ENCODE measurements at regions of chr17 and their contacts with region 1.

Region 1: DNA sequence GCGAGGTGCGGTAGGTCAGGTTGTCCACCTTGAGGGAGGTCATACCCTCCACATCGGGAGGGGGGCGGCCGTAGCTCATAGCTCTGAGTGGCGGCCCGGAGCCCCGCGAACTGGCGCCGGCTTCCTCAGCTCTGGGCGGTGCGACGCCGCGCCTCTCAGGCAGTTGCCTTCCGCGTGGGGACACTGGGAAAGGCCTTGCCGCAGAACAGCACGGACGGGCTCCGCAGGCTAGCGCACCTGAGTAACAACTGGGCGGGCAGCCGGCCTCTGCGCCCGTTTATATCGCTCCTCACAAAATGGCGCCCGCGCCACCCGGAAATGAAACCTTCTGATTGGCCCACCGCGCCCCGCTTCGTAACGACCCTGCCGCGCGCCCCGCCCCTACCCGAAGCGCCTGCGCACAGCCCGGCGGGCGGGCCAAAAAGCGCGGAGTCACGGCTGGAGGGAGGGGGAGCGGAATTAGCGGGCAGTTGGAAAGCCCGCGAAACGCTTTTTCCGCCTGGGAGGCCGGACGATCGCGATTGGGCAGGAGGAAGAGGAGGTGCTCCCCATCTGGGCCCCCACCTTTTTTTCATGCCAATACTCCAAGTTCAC is at the start of gene SRSF2:
- DNase-seq: peak; percentile 99
- ATAC-seq: peak; percentile 75
- H3K4me3 Mint-ChIP-seq: peak within 1 kb of the TSS; percentile 85
- H3K27ac Mint-ChIP-seq: peak within 1 kb of the TSS; percentile 98
- H3K4me1 Mint-ChIP-seq: peaks cover 40% of the 10 kb centered on the region
- H3K27me3 Mint-ChIP-seq: no peaks in the 10 kb centered on the region
- total RNA-seq, gene SRSF2: 335 to 340 TPM

Region 2: GRCh38 chr17:75784473-75785015 is 952.6 kb before region 1 on chr17 and contains the start of gene UNK:
- CTCF ChIA-PET with region 1: no interaction called
- POLR2A ChIA-PET with region 1: no interaction called
- intact Hi-C with region 1: loop called (anchors 1 to 5 kb)
- DNase-seq: peak; percentile 97
- ATAC-seq: peak; percentile 67
- H3K4me3 Mint-ChIP-seq: peak within 1 kb of the TSS; percentile 91
- H3K27ac Mint-ChIP-seq: peak within 1 kb of the TSS; percentile 100
- H3K4me1 Mint-ChIP-seq: peaks cover 55% of the 10 kb centered on the region
- H3K27me3 Mint-ChIP-seq: peaks cover 1% of the 10 kb centered on the region
- total RNA-seq, gene UNK: 24.5 to 33.7 TPM

Region 3: DNA sequence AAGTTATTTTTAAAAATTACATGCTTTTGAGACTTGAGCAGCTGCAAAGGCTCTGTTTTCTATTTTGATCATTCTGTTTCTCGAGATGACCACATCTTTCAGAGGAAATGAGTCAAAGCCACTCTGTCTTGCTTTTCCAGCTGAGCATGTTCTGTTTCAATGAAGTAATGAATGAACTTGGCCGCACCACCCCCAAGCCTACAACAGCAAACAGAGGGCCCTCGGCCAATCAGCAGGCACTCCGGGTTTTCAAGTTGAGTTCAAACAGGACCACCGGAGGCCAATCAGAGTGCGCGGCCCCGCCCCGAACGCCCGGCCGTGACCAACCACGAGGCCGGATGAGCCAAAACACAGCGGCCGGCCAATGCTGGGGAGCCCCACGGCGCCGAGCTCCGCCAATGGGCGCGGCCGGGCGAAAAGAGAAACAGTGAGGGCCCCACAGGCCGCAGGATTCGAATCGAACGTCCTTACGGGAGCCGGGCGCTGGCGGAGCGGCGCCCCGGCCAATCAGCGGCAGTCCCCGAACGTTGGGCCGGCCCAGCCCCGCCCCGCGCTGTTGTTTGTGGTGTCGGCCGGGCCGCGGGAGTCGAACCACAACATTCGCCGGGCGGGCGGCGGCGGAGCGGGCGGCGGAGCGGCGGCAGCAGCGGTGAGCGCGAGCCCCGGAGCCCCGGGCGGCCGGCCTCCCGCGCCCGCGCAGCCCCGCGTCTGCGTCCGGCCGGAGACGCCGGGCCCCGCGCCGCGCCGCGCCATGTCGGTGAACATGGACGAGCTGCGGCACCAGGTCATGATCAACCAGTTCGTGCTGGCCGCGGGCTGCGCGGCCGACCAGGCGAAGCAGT is 472.2 kb before region 1 on chr17 and contains the start of gene UBALD2:
- CTCF ChIA-PET with region 1: no interaction called
- POLR2A ChIA-PET with region 1: interaction called, 3 read pairs
- intact Hi-C with region 1: loop called (anchors 1 to 10 kb)
- DNase-seq: peak; percentile 99
- ATAC-seq: peak; percentile 81
- H3K4me3 Mint-ChIP-seq: peak within 1 kb of the TSS; percentile 96
- H3K27ac Mint-ChIP-seq: peak within 1 kb of the TSS; percentile 100
- H3K4me1 Mint-ChIP-seq: peaks cover 52% of the 10 kb centered on the region
- H3K27me3 Mint-ChIP-seq: no peaks in the 10 kb centered on the region
- total RNA-seq, gene UBALD2: 299 to 639 TPM

Region 4: DNA sequence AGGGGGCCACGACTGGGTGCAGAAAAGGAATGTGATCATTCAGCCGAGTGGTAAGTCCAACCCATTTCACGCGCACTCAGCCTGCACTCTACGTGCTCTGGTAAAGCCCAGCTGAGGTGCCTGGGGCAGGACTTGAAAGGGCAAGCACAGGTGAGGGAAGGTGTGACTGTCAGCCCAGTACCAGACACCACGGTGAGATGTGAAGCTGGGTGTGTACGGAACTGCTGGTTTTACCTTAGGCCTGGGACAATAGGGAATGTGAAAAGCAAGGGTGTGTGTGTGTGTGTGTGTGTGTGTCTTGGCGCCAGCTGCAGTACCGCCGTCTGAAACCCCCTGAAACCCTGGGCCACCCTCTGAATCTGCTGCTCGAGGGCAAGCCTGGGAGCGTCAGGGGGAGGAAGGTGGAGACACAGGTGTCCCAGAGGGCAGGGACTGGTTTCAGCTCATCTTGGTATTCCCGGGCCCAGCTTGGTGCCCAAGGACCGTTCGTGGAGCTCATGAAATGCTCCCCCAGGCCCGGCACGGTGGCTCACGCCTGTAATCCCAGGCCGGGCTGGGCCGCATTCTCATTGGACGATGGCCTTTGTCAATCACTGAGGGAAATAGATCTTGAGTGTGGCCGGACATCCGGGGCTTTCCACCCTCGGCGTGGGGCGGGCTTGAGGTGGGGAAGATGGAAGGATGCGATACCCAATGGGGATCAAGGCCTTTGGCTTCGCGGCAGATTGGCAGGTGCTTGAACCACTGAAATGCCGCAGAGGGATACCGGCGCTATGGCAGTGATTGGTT is 65.9 kb before region 1 on chr17:
- CTCF ChIA-PET with region 1: no interaction called
- POLR2A ChIA-PET with region 1: interaction called, 3 read pairs
- intact Hi-C with region 1: loop called in 1 of 2 experiments (anchors 1 kb)
- DNase-seq: peak; percentile 100
- ATAC-seq: peak; percentile 100
- H3K4me3 Mint-ChIP-seq: peak overlapping the region; percentile 87
- H3K27ac Mint-ChIP-seq: peak overlapping the region; percentile 95
- H3K4me1 Mint-ChIP-seq: peaks cover 25% of the 10 kb centered on the region
- H3K27me3 Mint-ChIP-seq: no peaks in the 10 kb centered on the region

Region 5: DNA sequence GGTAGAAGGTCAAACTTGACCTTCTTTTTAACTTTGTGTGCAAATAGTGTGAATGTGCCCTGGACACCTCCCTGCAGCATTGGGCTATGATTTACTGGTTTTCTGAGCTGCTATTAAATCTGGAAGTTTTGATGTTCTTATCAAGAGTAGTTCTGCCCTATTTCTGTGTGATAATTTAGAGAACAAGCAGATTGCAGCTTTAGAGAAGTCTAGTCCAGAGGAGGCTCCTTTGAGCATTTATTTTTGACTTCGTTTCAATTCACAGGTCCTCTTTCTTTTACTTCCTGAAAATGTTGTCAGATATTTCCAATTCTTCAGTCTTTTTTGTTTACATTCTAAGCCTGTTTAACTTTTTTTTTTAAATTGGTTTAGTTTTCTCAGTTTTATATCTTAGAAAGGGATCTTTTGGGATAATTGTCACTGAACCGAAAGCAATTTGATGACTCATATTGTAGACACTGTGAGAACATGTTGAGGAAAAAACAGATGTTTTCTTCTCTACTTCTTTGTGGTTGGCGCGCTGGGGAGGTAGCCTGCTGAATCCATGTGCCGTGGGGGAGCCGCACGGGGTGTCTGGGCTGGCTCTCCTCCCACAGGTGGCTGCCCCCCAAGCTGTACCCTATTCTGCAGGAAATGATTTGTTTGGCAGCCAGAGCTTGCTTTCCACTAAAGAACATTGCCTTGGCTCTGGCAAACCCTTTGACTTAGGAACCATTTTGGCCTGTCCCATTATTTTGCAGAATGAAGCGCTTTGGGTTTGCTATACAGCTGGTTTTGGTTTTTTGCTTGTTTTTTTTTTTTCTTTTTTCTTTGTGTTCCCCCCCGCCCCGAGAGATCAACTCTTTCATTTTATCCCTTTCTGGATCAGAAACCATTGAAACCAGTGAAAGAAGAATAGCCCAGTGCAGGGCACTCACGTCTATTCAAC is 54.1 kb after region 1 on chr17:
- CTCF ChIA-PET with region 1: no interaction called
- POLR2A ChIA-PET with region 1: no interaction called
- intact Hi-C with region 1: loop called in 1 of 2 experiments (anchors 1 kb)
- DNase-seq: peak; percentile 73
- ATAC-seq: peak; percentile 89
- H3K4me3 Mint-ChIP-seq: peak overlapping the region; percentile 12
- H3K27ac Mint-ChIP-seq: no peak overlapping the region
- H3K4me1 Mint-ChIP-seq: peaks cover 10% of the 10 kb centered on the region
- H3K27me3 Mint-ChIP-seq: no peaks in the 10 kb centered on the region

Region 6: DNA sequence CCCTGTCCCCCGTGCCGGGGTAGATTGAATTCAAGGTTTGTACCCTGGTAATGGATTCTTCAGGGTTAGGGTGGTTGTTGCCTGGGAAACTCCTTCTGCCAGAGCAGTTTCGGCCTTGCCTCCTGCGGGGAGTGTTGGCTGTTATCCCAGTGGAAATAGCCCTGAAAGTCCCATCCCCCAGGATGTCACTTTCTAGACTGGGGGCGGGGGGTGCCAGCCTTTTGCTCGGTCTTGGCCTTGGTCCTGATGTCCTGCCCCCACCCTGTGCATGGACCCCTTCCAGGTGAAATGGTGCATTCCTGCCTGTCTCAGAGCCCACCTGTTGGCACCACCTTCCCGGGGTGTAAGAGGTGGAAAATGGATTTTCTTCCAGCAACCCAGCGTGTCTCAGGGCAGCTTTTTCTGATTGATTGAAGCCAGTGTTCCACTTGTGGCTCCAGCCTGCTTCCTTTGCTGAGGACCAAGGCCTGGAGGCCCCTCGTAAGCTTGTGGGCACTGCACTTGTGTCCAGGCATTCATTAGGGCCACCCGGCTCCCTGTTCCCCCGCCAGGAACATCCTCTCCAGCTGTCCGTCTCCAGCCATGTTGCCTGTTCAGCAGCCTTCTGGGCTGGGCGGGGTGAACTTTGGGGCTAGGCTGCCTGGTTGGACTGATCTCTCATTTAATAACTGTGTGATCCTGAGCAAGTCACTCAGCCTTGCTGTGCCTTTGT is 156.6 kb after region 1 on chr17:
- CTCF ChIA-PET with region 1: no interaction called
- POLR2A ChIA-PET with region 1: no interaction called
- intact Hi-C with region 1: no loop called
- DNase-seq: no peak
- ATAC-seq: no peak
- H3K4me3 Mint-ChIP-seq: no peak overlapping the region
- H3K27ac Mint-ChIP-seq: no peak overlapping the region
- H3K4me1 Mint-ChIP-seq: no peaks in the 10 kb centered on the region
- H3K27me3 Mint-ChIP-seq: no peaks in the 10 kb centered on the region

Region 7: GRCh38 chr17:77456951-77457548 is 719.9 kb after region 1 on chr17:
- CTCF ChIA-PET with region 1: no interaction called
- POLR2A ChIA-PET with region 1: no interaction called
- intact Hi-C with region 1: loop called (anchors 2 to 10 kb)
- DNase-seq: peak; percentile 68
- ATAC-seq: no peak
- H3K4me3 Mint-ChIP-seq: peak overlapping the region; percentile 96
- H3K27ac Mint-ChIP-seq: peak overlapping the region; percentile 98
- H3K4me1 Mint-ChIP-seq: peaks cover 47% of the 10 kb centered on the region
- H3K27me3 Mint-ChIP-seq: no peaks in the 10 kb centered on the region

Region 8: DNA sequence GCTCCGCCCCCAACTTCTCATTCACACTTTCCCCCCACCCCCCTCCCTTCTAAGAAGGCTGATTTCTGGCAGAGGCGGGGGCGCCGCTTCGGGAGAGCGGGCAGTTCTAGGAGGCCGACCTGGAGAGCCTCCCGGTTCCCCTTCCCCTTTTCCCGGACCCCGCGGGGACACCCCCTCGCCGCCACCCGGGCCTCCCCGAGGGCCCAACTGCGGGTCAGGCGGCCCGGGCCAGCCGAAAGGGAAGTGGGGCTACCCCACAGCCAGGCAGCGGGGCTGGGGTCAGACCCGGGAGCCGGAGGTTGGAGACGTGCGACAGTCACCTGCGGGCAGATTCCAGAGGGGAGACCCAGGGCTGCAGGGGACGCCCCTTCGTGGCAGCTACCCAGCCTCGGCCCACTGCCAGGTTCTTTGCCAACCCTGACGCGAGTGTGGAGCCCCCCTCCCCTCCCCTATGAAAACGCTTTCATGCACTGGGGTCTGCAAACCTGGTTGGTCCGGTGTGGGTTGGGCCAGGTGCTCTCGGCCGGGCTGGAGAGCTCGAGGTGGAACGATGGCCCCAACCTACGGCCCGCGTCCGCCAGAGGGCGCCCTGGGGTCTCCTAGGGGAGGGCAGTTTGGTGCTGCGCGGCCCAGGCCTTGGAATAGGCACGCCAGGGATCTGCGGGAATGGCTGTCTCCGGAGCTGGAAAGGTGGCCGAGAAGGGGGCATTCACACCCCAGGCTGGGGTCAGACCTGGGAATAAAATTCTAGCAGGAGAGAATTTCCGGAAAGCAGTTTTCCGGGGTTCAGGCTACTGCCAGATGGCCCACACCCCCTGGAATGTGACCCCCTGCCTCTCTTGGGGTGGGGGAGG is 1623.4 kb after region 1 on chr17:
- CTCF ChIA-PET with region 1: no interaction called
- POLR2A ChIA-PET with region 1: no interaction called
- intact Hi-C with region 1: loop called in 1 of 2 experiments (anchors 1 kb)
- DNase-seq: peak; percentile 97
- ATAC-seq: peak; percentile 41
- H3K4me3 Mint-ChIP-seq: peak overlapping the region; percentile 74
- H3K27ac Mint-ChIP-seq: peak overlapping the region; percentile 90
- H3K4me1 Mint-ChIP-seq: peaks cover 42% of the 10 kb centered on the region
- H3K27me3 Mint-ChIP-seq: peaks cover 3% of the 10 kb centered on the region

Measured in activated CD4-positive, alpha-beta T cell treated with anti-CD3 and anti-CD28 coated beads for 36 hours (primary cell).